ENCODE measurements at regions of chr19 and their contacts with region 1.

Region 1: DNA sequence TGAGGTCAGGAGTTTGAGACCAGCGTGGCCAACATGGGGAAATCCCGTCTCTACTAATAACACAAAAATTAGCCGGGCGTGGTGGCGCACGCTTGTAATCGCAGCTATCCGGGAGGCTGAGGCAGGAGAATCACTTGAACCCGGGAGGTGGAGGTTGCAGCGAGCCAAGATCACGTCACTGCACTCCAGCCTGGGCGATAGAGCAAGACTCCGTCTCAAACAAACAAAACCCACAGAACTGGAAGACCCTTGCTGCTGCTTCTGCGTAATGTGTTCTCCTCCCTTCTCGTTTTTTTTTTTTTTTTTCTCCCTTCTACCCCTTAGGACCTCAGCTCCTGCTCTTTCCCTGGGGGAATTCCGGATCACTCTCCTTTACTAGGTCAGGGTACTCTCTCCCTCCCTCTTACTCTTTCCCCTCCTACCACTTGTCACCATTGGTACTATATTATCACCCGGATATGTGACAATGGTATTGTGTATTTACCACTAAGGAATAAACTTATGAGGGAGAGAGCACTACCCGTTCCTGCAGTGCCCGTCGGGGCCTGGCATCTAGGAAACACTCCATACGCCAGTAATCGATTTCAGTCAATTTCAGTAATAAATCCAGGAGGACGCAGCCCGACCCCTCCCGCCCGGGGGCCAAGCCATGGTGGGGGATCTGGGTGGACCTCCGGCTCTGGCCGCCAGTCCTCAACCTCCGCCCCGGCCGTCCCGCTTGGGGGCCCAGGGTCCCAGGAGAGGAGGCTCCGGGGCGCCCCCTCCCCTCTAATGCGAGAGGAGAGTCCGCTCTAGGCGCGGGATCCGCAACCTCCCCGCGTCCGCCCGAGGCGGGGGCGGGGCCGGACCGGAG is 429 bp upstream of the GARRE1 start:
- DNase-seq: peak; percentile 95

Region 2: DNA sequence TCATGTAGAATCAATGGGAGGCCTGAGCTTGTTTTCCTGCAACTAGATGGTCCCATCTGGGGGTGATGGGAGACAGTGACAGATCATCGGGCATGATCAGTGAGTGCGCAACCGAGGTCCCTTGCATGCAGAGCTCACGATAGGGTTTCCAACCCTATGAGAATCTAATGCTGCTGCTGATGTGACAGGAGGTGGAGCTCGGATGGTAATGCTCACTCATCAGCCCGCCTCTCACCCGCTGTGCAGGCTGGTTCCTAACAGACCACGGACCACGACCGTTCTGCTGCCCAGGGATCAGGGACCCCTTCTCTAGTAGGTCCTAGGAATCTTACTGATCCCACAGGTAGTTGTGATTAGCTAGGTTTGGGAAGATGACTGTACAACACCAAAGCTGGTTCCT is 23.1 kb before region 1 on chr19:
- intact Hi-C with region 1: loop called in 1 of 2 experiments (anchors 1 kb)
- DNase-seq: no peak

Region 3: DNA sequence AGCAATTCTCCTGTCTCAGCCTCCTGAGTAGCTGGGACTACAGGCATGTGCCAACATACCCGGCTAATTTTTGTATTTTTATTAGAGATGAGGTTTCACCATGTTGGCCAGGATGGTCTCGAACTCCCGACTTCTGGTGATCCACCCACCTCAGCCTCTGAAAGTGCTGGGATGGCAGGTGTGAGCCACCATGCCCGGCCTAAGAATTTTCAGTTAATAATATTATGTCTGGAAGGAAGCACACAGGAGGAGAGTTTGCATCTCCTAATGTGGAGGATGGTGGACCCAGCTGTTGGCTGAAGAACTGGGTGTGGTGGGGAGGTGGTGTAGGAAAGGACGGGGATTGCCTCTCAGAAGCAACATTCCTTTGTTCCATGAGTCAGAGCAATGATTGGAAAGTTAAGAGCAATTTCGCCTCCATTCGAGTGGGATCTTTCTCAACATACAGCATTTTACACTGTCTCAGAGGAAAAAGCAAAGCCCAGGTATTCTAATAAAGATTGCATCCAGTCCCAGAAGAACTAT is 162.2 kb after region 1 on chr19:
- intact Hi-C with region 1: no loop called
- DNase-seq: no peak